Activated CD4-positive, alpha-beta T cell treated with anti-CD3 and anti-CD28 coated beads, Interleukin-2, amount 10 ng/mL, durations not matched to agents 7 days and 5 days (primary cell): ENCODE measurements at regions of chr6 and their contacts with region 1.

Region 1: GRCh38 chr6:155171109-155171746 is 92.6 kb upstream of the CLDN20 start:
- DNase-seq: peak; percentile 86
- H3K4me3 Mint-ChIP-seq: peak overlapping the region; percentile 55
- H3K27ac Mint-ChIP-seq: peak overlapping the region; percentile 97
- H3K4me1 Mint-ChIP-seq: peaks cover 52% of the 10 kb centered on the region
- H3K27me3 Mint-ChIP-seq: no peaks in the 10 kb centered on the region

Region 2: DNA sequence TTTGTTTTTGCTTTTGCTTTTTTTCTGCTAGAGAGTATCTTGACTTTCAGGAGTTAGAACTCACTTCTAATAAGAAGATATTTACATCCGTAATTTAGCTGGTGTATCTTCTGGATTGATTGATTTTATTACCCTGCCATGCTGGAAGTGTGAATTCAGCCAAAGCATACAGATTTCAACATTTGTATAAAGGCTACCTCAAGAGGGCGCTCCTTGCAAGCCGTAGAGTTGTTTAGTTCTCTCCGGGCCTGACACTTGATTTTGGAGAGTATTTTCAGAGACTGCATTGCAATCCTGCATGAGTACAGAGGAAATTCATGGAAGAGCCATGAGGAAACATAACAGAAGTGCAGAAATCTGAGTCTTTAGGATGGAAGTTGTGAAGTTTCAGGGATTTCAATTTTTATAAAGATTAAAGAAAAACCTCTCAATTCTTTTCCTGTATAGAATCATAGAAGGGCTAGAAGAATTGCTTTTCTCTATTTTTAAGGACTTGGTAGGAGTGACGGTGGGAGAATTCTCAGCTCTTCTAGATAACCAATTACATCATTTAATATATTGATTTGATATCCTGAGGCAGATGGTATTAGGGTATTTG is 242.8 kb before region 1 on chr6:
- CTCF ChIA-PET with region 1: interaction called, 10 read pairs
- POLR2A ChIA-PET with region 1: no interaction called
- DNase-seq: peak; percentile 82
- H3K4me3 Mint-ChIP-seq: no peak overlapping the region
- H3K27ac Mint-ChIP-seq: no peak overlapping the region
- H3K4me1 Mint-ChIP-seq: peaks cover 12% of the 10 kb centered on the region
- H3K27me3 Mint-ChIP-seq: no peaks in the 10 kb centered on the region

Region 3: GRCh38 chr6:154986787-154987235 is 184.4 kb before region 1 on chr6:
- CTCF ChIA-PET with region 1: no interaction called
- POLR2A ChIA-PET with region 1: no interaction called
- DNase-seq: no peak
- H3K4me3 Mint-ChIP-seq: no peak overlapping the region
- H3K27ac Mint-ChIP-seq: no peak overlapping the region
- H3K4me1 Mint-ChIP-seq: no peaks in the 10 kb centered on the region
- H3K27me3 Mint-ChIP-seq: peaks cover 3% of the 10 kb centered on the region

Region 4: GRCh38 chr6:155158030-155158843 is 13.0 kb before region 1 on chr6:
- CTCF ChIA-PET with region 1: interaction called, 16 read pairs
- POLR2A ChIA-PET with region 1: interaction called, 6 read pairs
- DNase-seq: no peak
- H3K4me3 Mint-ChIP-seq: no peak overlapping the region
- H3K27ac Mint-ChIP-seq: no peak overlapping the region
- H3K4me1 Mint-ChIP-seq: peaks cover 61% of the 10 kb centered on the region
- H3K27me3 Mint-ChIP-seq: no peaks in the 10 kb centered on the region

Region 5: DNA sequence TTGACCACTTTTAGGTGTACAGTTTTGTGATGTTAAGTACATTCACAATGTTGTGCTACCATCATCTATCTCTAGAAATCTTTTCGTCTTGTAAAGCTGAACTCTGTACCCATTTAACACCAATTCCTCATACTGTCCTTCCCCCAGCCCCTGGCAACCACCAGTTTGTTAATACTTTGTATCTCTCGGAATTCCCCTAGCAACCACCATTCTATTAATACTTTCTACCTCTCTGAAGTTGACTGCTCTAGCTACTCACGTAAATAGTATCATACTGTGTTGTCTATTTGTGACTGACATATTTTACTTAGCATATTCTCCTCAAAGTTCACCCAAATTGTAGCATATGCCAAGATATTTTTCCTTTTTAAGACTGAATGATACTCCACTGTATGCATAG is 10.3 kb after region 1 on chr6:
- CTCF ChIA-PET with region 1: no interaction called
- POLR2A ChIA-PET with region 1: no interaction called
- DNase-seq: no peak
- H3K4me3 Mint-ChIP-seq: no peak overlapping the region
- H3K27ac Mint-ChIP-seq: no peak overlapping the region
- H3K4me1 Mint-ChIP-seq: peaks cover 6% of the 10 kb centered on the region
- H3K27me3 Mint-ChIP-seq: no peaks in the 10 kb centered on the region